ENCODE measurements at regions of chr9 and their contacts with region 1.

Region 1: DNA sequence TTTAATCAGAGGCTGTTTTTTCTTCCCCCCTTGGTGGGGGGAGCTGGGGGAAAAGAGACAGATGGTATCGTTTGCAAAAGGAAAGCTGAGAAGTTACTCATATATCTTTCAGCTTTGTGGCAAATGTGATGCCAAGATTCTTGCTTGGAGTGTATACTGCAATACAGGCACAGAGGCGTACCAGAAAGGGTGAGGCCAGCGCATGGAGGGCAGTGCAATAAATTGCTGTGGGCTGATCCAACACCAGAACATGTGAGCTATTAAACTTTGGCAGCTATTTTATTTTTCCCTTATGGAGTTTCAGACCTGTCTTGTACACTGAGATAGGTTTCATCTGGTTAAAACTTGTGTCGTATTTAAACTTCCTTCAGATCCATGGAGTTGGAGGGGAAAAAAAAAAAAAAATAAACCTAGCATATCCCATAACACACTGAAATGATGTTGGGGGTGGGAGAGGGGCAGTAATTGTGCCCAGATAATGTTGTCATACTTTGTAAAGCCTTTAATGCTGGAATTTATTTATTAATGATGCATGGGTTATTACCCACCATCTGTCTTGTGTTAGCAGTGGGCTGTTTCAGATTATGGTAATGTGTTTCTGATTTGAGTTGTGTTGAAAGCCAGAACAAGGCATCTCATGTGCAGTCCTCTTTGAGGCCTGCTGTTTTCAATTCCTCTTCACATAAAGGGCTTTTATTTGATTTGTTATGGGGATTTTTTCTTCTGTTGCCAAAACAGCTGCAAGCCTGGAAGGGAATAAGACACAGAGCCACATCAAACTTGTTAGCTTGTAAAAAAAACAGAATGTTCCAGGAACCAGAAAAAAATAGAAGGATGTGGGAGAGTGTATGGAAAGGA is 891.3 kb downstream of the TLE1 start:
- DNase-seq: no peak
- H3K4me3 ChIP-seq: no peak overlapping the region
- H3K27ac ChIP-seq: no peak overlapping the region
- H3K4me1 ChIP-seq: no peaks in the 10 kb centered on the region
- H3K27me3 ChIP-seq: no peaks in the 10 kb centered on the region
- CTCF ChIP-seq: no peak

Region 2: DNA sequence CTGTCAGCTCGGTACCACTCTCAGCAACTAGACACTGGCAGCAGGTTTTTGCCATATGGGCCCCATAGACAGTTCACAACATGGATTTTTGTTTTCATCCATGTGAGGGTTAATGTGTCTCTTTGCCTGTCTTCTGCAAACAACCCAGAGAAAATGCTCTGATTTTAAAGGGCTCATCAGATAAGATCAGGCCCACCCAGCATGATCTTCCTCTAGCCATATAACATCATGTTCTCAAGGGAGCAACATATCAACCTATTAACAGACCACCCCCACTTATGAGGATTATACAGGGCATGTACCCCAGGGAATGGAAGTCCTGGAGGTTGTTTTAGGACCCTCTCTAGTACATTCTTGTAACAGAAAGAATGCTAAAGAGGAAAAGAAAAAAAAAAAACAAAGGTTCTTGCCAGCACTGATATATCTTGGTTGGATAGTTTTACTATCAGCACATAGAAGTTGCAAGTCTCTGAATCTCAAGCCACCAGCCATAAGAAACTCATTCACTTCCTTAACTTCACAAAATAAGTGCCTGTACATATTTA is 211.2 kb before region 1 on chr9:
- CTCF ChIA-PET with region 1: no interaction called
- dilution Hi-C with region 1: no loop called
- in situ Hi-C with region 1: no loop called
- intact Hi-C with region 1: no loop called
- DNase-seq: no peak
- H3K4me3 ChIP-seq: no peak overlapping the region
- H3K27ac ChIP-seq: no peak overlapping the region
- H3K4me1 ChIP-seq: no peaks in the 10 kb centered on the region
- H3K27me3 ChIP-seq: no peaks in the 10 kb centered on the region
- CTCF ChIP-seq: no peak

Region 3: GRCh38 chr9:80732558-80732957 is 65.5 kb before region 1 on chr9:
- CTCF ChIA-PET with region 1: no interaction called
- dilution Hi-C with region 1: loop called (anchors 10 kb)
- in situ Hi-C with region 1: no loop called
- intact Hi-C with region 1: no loop called
- DNase-seq: no peak
- H3K4me3 ChIP-seq: no peak overlapping the region
- H3K27ac ChIP-seq: no peak overlapping the region
- H3K4me1 ChIP-seq: no peaks in the 10 kb centered on the region
- H3K27me3 ChIP-seq: no peaks in the 10 kb centered on the region
- CTCF ChIP-seq: no peak

Region 4: DNA sequence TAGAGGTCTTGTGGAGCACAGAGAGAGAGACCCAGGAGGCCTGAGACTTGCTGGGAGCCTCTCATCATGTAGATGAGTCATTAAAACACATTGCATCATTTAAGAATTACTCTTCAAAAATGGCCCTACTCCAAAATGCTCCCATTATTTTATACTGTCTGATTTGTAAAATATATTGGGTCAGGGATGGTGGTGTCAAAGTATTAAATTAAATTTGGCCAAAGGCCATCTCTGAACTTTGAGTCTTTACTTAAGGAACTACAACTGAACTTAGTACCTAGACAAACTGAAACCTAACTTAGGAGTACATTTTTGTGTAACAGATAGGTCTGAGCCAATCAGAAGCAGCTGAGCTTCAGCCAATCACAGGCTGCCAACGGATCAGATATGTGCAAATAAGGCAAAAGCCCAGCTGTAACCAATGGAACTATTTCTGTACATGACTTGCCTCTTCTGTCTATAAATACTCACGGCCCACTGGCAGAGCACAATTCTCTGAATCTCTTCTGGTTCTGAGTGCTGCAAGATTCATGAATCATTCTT is 234.0 kb after region 1 on chr9:
- CTCF ChIA-PET with region 1: no interaction called
- dilution Hi-C with region 1: loop called (anchors 10 kb)
- in situ Hi-C with region 1: no loop called
- intact Hi-C with region 1: no loop called
- DNase-seq: peak; percentile 76
- H3K4me3 ChIP-seq: no peak overlapping the region
- H3K27ac ChIP-seq: peak overlapping the region; percentile 62
- H3K4me1 ChIP-seq: peaks cover 37% of the 10 kb centered on the region
- H3K27me3 ChIP-seq: no peaks in the 10 kb centered on the region
- CTCF ChIP-seq: no peak

Region 5: GRCh38 chr9:81083067-81083466 is 285.0 kb after region 1 on chr9:
- CTCF ChIA-PET with region 1: no interaction called
- dilution Hi-C with region 1: no loop called
- in situ Hi-C with region 1: no loop called
- intact Hi-C with region 1: no loop called
- DNase-seq: no peak
- H3K4me3 ChIP-seq: no peak overlapping the region
- H3K27ac ChIP-seq: no peak overlapping the region
- H3K4me1 ChIP-seq: no peaks in the 10 kb centered on the region
- H3K27me3 ChIP-seq: no peaks in the 10 kb centered on the region
- CTCF ChIP-seq: peak in 1 of 2 donors; percentile 18

Measured in mammary epithelial cell (primary cell).